Ovary (tissue), 10 donors: ENCODE measurements at regions of chr15 and their contacts with region 1.

Region 1: DNA sequence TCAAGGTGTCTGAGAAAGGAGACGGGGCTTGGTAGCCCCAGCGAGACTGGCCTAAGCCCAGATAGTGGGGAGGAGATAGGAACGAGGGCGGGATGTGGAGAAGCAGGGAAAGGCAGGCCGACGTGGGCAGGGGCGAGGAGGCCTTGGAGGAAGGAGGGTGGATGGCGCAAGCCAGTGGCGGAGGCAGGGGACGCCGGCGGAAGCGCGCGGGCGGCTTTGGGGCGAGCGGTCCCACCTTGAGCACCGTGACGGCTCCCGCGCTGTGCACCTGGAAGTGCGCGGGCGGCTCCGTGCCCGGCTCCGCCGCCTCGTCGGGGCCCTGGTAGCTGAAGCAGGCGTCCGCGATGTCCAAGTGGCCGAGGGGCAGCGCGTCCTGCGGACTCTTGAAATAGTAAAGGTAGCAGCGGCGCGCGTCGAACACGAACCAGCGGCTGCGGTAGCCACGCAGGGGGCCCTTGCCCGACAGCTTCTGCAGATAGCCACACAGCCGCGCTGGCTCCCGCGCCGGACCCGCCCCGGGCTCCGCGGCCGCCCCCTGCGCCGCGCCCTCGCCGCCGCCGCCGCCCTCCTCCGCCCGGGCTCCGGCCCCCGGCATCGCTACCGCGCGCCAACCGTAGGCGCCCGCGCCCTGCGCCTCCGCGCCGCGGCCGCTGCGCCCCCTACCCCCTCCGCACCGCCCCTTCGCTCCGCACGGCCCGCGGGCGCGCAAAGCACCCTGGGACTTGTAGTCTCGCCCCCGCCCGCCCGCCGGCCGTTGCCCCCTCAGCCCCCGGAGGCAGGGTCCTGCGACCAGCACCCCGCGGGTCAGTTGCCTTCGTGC is at the start of gene TBC1D2B:
- DNase-seq: peak; percentile 72 to 83 (median 81)
- H3K4me3 ChIP-seq: peak within 1 kb of the TSS; percentile 82
- H3K27ac ChIP-seq: peak within 1 kb of the TSS; percentile 93 to 95
- H3K4me1 ChIP-seq: peaks cover 9% of the 10 kb centered on the region
- H3K27me3 ChIP-seq: no peaks in the 10 kb centered on the region
- CTCF ChIP-seq: no peak
- EP300 ChIP-seq: no peak
- POLR2A ChIP-seq: no peak
- total RNA-seq, gene TBC1D2B: 42.3 to 146 (median 115) TPM

Region 2: GRCh38 chr15:78012643-78013077 is 64.6 kb before region 1 on chr15:
- intact Hi-C with region 1: loop called in 3 of 4 experiments (anchors 5 to 10 kb)
- DNase-seq: peak in 4 of 5 donors; percentile 35 to 70 (median 66)
- H3K4me3 ChIP-seq: no peak overlapping the region
- H3K27ac ChIP-seq: no peak overlapping the region
- H3K4me1 ChIP-seq: peaks cover 13% of the 10 kb centered on the region
- H3K27me3 ChIP-seq: no peaks in the 10 kb centered on the region
- CTCF ChIP-seq: no peak
- EP300 ChIP-seq: no peak
- POLR2A ChIP-seq: no peak

Region 3: DNA sequence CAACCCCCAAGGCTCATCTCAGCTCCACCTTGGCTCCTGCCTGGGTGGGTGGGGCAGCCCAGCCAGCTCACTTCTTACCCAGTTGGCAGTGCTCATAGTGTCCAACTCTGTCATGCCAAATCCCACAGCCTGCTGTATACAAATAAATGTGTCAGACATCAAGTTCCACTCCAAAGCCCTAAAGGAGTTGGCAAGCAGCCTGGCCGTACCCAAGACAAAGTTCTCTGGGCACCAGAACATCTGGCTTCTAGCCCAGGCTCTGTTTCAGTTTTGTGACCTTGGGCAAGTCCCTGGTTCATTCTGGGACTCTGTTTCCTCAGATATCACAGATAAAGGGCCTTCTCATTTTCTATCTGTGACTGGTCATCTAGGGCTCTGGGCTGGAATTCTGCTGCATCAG is 139.4 kb after region 1 on chr15:
- intact Hi-C with region 1: no loop called
- DNase-seq: no peak
- H3K4me3 ChIP-seq: no peak overlapping the region
- H3K27ac ChIP-seq: no peak overlapping the region
- H3K4me1 ChIP-seq: peaks cover 4% of the 10 kb centered on the region
- H3K27me3 ChIP-seq: no peaks in the 10 kb centered on the region
- CTCF ChIP-seq: no peak
- EP300 ChIP-seq: no peak
- POLR2A ChIP-seq: no peak